Motor neuron (in vitro differentiated cells): ENCODE measurements at regions of chrX and their contacts with region 1.

Region 1: GRCh38 chrX:148049441-148049840 is 68.3 kb downstream of the FMR1NB start:
- ATAC-seq: peak in 1 of 8 experiments; percentile 26
- H3K4me3 ChIP-seq: no peak overlapping the region
- H3K27ac ChIP-seq: no peak overlapping the region
- H3K4me1 ChIP-seq: peaks cover 0 to 3% of the 10 kb centered on the region in 2 donors

Region 2: DNA sequence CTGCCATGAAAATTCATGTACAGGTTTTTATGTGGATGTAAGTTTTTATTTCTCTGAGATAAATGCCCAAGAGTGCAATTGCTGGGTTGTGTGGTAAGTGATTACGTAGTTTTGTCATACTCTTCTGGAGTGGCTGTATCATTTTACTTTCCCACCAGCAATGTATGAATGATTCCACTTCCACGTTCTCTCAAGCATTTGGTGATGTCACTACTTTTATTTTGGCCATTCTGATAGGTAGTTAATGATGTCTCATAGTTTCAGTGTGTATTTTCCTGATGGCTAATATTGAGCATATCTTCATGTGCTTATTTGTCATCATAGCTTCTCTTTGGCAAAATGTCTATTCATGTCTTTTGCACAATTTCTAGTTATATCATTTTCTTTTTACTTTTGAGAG is 59.7 kb after region 1 on chrX:
- in situ Hi-C with region 1: no loop called
- ATAC-seq: no peak
- H3K4me3 ChIP-seq: no peak overlapping the region
- H3K27ac ChIP-seq: no peak overlapping the region
- H3K4me1 ChIP-seq: no peaks in the 10 kb centered on the region

Region 3: GRCh38 chrX:149286940-149287349 is 1237.5 kb after region 1 on chrX:
- in situ Hi-C with region 1: loop called in 1 of 9 experiments (anchors 25 kb)
- ATAC-seq: peak in 4 of 8 experiments; percentile 35 to 52 (median 44)
- H3K4me3 ChIP-seq: no peak overlapping the region
- H3K27ac ChIP-seq: no peak overlapping the region
- H3K4me1 ChIP-seq: peaks cover 0 to 3% of the 10 kb centered on the region in 2 donors

Region 4: DNA sequence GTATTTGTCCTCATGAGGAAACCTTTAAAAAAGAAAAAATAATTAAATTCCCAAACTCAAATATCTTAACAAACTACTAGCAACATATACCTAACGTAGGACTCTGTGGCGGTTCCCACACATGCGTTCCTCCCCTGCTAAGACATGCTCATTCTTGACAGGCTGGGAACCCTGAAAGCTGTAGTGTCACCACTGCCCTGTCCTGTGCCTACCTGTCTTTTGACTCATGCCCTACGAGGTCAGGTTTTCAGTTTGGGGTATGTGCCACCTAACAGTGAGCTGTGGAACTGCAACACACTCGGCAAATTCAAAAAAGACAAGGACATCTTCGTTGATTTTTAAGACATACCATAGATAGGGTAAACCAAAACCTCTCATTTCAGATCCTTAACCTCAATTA is 1437.9 kb after region 1 on chrX:
- in situ Hi-C with region 1: loop called in 1 of 9 experiments (anchors 25 kb)
- ATAC-seq: no peak
- H3K4me3 ChIP-seq: no peak overlapping the region
- H3K27ac ChIP-seq: no peak overlapping the region
- H3K4me1 ChIP-seq: no peaks in the 10 kb centered on the region